ENCODE measurements at regions of chr19 and their contacts with region 1.

Region 1: GRCh38 chr19:54333586-54334298 is 5.2 kb downstream of the LILRA4 start:
- DNase-seq: no peak
- ATAC-seq: peak; percentile 67
- H3K4me3 ChIP-seq: no peak overlapping the region
- H3K27ac ChIP-seq: no peak overlapping the region
- H3K4me1 ChIP-seq: no peaks in the 10 kb centered on the region
- H3K27me3 ChIP-seq: 0 out of 4 replicates have a peak, but pooled peaks cover 0 to under 1% of the 10 kb centered on the region in 2 experiments
- CTCF ChIP-seq: no peak
- EP300 ChIP-seq: no peak
- POLR2A ChIP-seq: no peak
- RAD21 ChIP-seq: no peak

Region 2: GRCh38 chr19:54209811-54210494 is 123.8 kb before region 1 on chr19:
- CTCF ChIA-PET with region 1: no interaction called
- POLR2A ChIA-PET with region 1: no interaction called
- RAD21 ChIA-PET with region 1: no interaction called
- SMC1A ChIA-PET with region 1: no interaction called
- in situ Hi-C with region 1: no loop called
- intact Hi-C with region 1: no loop called
- DNase-seq: no peak
- ATAC-seq: peak; percentile 21
- H3K4me3 ChIP-seq: no peak overlapping the region
- H3K27ac ChIP-seq: peak overlapping the region; percentile 16; the same call in 1 of the 2 replicates
- H3K4me1 ChIP-seq: peaks cover 55% of the 10 kb centered on the region
- H3K27me3 ChIP-seq: no peaks in the 10 kb centered on the region
- CTCF ChIP-seq: no peak
- EP300 ChIP-seq: no peak
- POLR2A ChIP-seq: no peak
- RAD21 ChIP-seq: no peak

Region 3: DNA sequence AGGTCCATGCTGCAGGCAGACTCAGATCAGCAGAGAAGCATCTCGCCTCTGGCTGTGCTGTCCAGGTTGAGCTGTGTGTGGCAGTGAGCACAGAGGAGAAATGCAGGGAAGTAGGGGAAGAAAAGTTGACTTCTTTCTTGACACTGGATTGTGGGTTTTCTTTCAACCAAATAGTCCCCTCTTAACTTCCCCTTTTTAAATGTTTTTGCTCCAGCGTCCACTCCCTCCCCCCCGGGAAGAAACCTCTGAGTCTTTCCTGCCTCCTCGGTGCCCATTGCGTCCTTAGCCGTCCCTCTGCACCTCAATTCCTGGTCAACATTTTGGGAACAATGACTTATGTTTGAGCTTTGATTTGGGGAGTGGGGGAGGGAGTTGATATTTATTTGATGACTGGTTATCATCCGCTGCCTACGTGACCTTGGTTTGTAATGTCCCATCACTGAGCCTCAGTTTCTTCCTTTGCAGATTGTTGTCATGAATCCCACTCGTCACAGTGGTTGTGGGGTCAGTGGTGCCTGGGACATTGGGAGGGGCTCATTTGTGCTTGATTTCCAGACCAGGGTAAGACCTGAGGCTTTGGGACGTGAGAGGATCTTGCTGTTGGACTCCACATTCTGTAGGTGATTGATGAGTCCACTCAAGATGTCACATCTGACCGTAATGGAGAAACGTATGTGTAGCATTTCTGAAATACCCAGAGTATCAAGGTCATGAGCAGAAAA is 52.6 kb before region 1 on chr19 and contains the start of gene LILRB2:
- CTCF ChIA-PET with region 1: no interaction called
- POLR2A ChIA-PET with region 1: no interaction called
- RAD21 ChIA-PET with region 1: no interaction called
- SMC1A ChIA-PET with region 1: no interaction called
- in situ Hi-C with region 1: no loop called
- intact Hi-C with region 1: no loop called
- DNase-seq: no peak
- ATAC-seq: no peak
- H3K4me3 ChIP-seq: no peak within 1 kb of the TSS
- H3K27ac ChIP-seq: no peak within 1 kb of the TSS
- H3K4me1 ChIP-seq: no peaks in the 10 kb centered on the region
- H3K27me3 ChIP-seq: peaks cover 0 to 1% of the 10 kb centered on the region in 2 experiments; a peak in 2 of 4 replicates
- CTCF ChIP-seq: no peak
- EP300 ChIP-seq: no peak
- POLR2A ChIP-seq: no peak
- RAD21 ChIP-seq: no peak
- polyA plus RNA-seq, gene LILRB2: not detected

Region 4: GRCh38 chr19:54312436-54313377 is 21.0 kb before region 1 on chr19 and contains the start of gene LILRA5:
- CTCF ChIA-PET with region 1: no interaction called
- POLR2A ChIA-PET with region 1: no interaction called
- RAD21 ChIA-PET with region 1: no interaction called
- SMC1A ChIA-PET with region 1: no interaction called
- in situ Hi-C with region 1: no loop called
- intact Hi-C with region 1: no loop called
- DNase-seq: no peak
- ATAC-seq: peak; percentile 86
- H3K4me3 ChIP-seq: no peak within 1 kb of the TSS
- H3K27ac ChIP-seq: no peak within 1 kb of the TSS
- H3K4me1 ChIP-seq: no peaks in the 10 kb centered on the region
- H3K27me3 ChIP-seq: no peaks in the 10 kb centered on the region
- CTCF ChIP-seq: no peak
- EP300 ChIP-seq: no peak
- POLR2A ChIP-seq: no peak
- RAD21 ChIP-seq: no peak
- polyA plus RNA-seq, gene LILRA5: 0.05 TPM in 1 of 2 experiments, not detected in the other

Region 5: DNA sequence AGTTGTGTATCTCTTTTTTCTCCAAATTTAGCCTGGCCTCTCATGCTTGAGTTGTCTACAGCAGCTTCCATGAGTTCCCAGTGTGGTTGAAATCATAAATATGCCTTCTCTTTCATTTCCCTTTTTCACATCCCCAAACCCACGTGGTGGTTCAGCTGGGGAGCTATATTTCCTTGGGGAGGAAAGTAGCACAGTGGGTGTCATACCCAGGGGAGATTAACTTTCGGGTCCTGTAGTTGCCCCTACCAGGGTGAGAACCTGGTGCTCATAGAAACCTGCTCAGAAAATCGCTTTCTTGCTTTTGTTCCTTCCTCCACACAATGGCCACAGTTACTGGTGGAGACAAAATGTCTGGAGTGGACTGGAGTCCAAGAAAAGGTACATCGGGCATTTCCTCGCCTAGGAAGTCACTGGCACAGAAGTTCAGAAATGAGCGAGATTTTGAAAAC is 12.2 kb after region 1 on chr19:
- CTCF ChIA-PET with region 1: interaction called, 171 read pairs
- POLR2A ChIA-PET with region 1: interaction called, 12 read pairs
- RAD21 ChIA-PET with region 1: interaction called, 6 read pairs
- SMC1A ChIA-PET with region 1: interaction called, 31 read pairs
- in situ Hi-C with region 1: no loop called
- intact Hi-C with region 1: no loop called
- DNase-seq: peak; percentile 74
- ATAC-seq: peak; percentile 98
- H3K4me3 ChIP-seq: no peak overlapping the region
- H3K27ac ChIP-seq: no peak overlapping the region
- H3K4me1 ChIP-seq: peaks cover 5% of the 10 kb centered on the region
- H3K27me3 ChIP-seq: 0 out of 4 replicates have a peak, but pooled peaks cover 0 to 3% of the 10 kb centered on the region in 2 experiments
- CTCF ChIP-seq: no peak
- EP300 ChIP-seq: peak; percentile 86 to 87; a peak in 3 of 4 replicates
- POLR2A ChIP-seq: no peak
- RAD21 ChIP-seq: peak; percentile 2; the same call in 1 of the 2 replicates

Measured in GM12878 (cell line).